ENCODE measurements at regions of chr10 and their contacts with region 1.

Region 1: GRCh38 chr10:99732033-99732912 is at the starts of genes COX15 and CUTC:
- DNase-seq: peak; percentile 98
- H3K4me3 ChIP-seq: peak within 1 kb of the TSS; percentile 48 to 90 (median 65)
- H3K27ac ChIP-seq: peak within 1 kb of the TSS; percentile 53
- H3K4me1 ChIP-seq: peaks cover 15% of the 10 kb centered on the region
- H3K27me3 ChIP-seq: no peaks in the 10 kb centered on the region
- CTCF ChIP-seq: peak; percentile 33 to 54
- POLR2A ChIP-seq: peak; percentile 86
- total RNA-seq, gene COX15: 31.7 and 34.6 TPM in 2 replicates
- total RNA-seq, gene CUTC: 17.7 and 20.4 TPM in 2 replicates

Region 2: DNA sequence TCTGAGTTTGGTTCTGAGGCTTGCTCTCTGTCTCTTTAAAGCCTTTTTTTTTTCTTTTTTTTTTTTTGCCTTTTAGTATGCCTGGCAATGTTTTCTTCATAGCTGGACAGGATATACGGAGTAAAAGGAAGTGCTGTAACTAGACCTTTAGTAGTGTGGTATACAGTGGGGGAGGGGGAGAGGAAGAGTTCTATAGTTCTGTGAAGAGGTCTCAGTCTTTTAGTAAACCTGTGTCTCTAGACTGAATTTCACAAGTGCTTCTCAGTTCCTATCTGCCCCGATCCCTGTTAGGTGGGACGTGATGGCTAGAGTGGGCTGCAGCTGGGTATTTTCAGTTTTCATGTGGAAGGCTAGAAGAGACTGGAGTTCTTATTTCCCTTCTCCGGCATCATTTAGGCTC is 47.1 kb after region 1 on chr10:
- CTCF ChIA-PET with region 1: interaction called, 4 read pairs
- POLR2A ChIA-PET with region 1: interaction called, 3 read pairs
- dilution Hi-C with region 1: no loop called
- intact Hi-C with region 1: loop called (anchors 1 kb)
- DNase-seq: peak; percentile 95
- H3K4me3 ChIP-seq: peak overlapping the region; percentile 0 to 75 (median 42)
- H3K27ac ChIP-seq: peak overlapping the region; percentile 100
- H3K4me1 ChIP-seq: peaks cover 79% of the 10 kb centered on the region
- H3K27me3 ChIP-seq: no peaks in the 10 kb centered on the region
- CTCF ChIP-seq: no peak
- POLR2A ChIP-seq: peak; percentile 41

Region 3: GRCh38 chr10:99809931-99810615 is 77.8 kb after region 1 on chr10:
- CTCF ChIA-PET with region 1: no interaction called
- POLR2A ChIA-PET with region 1: no interaction called
- dilution Hi-C with region 1: no loop called
- intact Hi-C with region 1: no loop called
- DNase-seq: no peak
- H3K4me3 ChIP-seq: no peak overlapping the region
- H3K27ac ChIP-seq: no peak overlapping the region
- H3K4me1 ChIP-seq: no peaks in the 10 kb centered on the region
- H3K27me3 ChIP-seq: no peaks in the 10 kb centered on the region
- CTCF ChIP-seq: no peak
- POLR2A ChIP-seq: no peak

Region 4: GRCh38 chr10:99880080-99880835 is 148.0 kb after region 1 on chr10:
- CTCF ChIA-PET with region 1: no interaction called
- POLR2A ChIA-PET with region 1: no interaction called
- dilution Hi-C with region 1: no loop called
- intact Hi-C with region 1: loop called (anchors 1 kb)
- DNase-seq: peak; percentile 81
- H3K4me3 ChIP-seq: no peak overlapping the region
- H3K27ac ChIP-seq: peak overlapping the region; percentile 72
- H3K4me1 ChIP-seq: peaks cover 22% of the 10 kb centered on the region
- H3K27me3 ChIP-seq: no peaks in the 10 kb centered on the region
- CTCF ChIP-seq: no peak
- POLR2A ChIP-seq: no peak

Region 5: DNA sequence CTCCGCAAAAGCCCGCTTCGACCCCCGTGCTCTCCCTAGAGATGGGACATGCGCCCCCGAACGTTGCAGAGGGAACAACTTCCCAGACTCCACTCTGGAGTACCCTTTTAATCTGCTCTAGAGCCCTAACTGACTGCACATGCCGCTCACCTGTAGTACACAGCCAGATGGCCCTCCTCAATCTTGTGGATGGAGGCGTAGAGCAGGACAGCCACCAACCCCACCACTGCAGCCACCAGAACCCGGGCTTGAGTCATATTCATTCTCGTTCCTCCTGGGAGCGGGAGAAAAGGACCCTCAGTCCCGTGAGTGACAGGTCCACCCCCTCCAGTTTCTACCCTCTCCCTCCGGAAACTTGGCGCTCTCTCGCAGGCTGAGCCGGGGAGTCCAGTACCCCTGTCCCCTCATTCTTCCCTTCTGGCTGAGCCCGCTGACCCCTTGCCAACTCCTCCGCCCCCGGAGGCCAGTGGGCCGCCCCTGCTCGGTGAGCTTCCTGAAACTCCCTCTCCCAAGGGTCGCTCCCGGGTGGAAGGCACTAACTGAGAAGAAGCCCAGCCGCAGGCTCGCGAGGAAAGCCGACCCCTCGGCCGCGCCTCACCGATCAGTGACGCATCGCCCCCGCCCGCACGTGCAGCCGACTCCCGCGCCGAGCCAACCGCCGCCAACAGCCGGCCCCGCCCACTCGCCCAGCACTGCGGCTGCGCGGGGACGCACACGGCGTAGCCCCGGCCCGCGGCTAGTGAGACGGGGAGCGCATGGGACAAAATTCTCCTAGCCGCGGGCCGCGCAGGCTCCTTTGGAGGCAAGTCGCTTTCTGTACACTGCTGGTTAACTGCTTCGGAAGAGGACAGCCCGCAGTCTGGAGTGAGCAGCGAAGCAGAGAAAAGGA is 453.3 kb after region 1 on chr10 and contains the start of gene ERLIN1:
- CTCF ChIA-PET with region 1: no interaction called
- POLR2A ChIA-PET with region 1: no interaction called
- dilution Hi-C with region 1: no loop called
- intact Hi-C with region 1: loop called (anchors 2 kb)
- DNase-seq: peak; percentile 95
- H3K4me3 ChIP-seq: peak within 1 kb of the TSS; percentile 51 to 89 (median 55)
- H3K27ac ChIP-seq: peak within 1 kb of the TSS; percentile 42
- H3K4me1 ChIP-seq: peaks cover 16% of the 10 kb centered on the region
- H3K27me3 ChIP-seq: no peaks in the 10 kb centered on the region
- CTCF ChIP-seq: peak in 1 of 2 donors; percentile 8
- POLR2A ChIP-seq: peak; percentile 88
- total RNA-seq, gene ERLIN1: 51.0 and 51.9 TPM in 2 replicates

Region 6: DNA sequence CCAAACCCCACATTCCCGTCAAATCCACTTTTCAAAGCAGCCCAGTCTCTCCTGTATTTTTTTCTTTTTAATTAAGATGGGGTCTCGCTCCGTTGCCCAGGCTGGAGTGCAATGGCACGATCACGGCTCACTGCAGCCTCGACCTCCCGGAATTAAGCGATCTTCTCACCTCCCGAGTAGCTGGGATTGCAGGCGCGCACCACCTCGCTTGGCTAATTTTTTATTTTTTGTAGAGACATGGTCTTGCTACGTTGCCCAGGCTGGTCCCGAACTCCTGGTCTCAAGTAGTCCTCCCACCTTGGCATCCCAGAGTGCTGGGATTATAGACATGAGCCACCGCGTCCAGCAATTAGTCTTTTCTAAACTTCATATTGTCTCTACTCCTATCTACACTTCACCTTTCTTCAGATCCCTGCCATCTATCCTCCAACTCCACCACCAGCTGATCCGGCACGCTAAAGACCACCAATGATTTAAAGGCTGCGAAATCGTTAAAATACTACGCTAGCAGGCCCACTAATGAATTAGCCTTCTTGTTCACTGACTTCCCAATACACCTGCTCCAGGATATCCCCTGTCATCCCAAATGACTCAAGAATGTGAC is 497.6 kb after region 1 on chr10:
- CTCF ChIA-PET with region 1: no interaction called
- POLR2A ChIA-PET with region 1: no interaction called
- dilution Hi-C with region 1: no loop called
- intact Hi-C with region 1: loop called (anchors 5 kb)
- DNase-seq: no peak
- H3K4me3 ChIP-seq: peak overlapping the region; percentile 42 to 72 (median 69)
- H3K27ac ChIP-seq: peak overlapping the region; percentile 46
- H3K4me1 ChIP-seq: peaks cover 2% of the 10 kb centered on the region
- H3K27me3 ChIP-seq: no peaks in the 10 kb centered on the region
- CTCF ChIP-seq: no peak
- POLR2A ChIP-seq: no peak